GM13977 (cell line): ENCODE measurements at regions of chr2 and their contacts with region 1.

Region 1: DNA sequence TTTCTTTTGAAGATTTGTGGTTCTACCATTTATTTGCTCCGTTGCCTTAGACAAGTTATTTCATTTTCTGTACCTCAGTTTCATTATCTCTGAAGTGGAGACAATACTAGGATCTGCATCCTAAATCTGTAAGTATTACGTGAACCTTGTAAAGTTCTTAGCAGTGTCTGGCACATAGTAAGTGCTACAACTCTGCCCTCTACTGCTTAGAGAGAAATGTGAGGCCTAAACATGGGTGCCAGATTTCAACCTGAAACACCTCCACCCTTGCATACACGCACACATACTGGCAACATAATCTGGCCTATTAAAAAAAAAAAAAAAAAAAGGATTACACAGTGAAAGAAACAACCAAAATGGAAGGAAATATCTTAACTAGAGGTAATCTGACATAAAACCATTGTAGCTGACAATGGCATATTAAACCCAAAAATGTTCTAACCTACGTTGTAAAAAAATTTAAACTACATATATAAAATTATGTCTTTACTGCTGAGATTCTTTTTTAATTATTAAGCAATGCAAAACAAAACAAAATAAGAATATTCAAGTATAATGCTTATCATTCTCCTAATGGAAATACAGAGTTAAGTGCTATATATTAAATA is 132.6 kb downstream of the MAP2 start:
- DNase-seq: peak; percentile 33
- CTCF ChIP-seq: peak; percentile 45

Region 2: DNA sequence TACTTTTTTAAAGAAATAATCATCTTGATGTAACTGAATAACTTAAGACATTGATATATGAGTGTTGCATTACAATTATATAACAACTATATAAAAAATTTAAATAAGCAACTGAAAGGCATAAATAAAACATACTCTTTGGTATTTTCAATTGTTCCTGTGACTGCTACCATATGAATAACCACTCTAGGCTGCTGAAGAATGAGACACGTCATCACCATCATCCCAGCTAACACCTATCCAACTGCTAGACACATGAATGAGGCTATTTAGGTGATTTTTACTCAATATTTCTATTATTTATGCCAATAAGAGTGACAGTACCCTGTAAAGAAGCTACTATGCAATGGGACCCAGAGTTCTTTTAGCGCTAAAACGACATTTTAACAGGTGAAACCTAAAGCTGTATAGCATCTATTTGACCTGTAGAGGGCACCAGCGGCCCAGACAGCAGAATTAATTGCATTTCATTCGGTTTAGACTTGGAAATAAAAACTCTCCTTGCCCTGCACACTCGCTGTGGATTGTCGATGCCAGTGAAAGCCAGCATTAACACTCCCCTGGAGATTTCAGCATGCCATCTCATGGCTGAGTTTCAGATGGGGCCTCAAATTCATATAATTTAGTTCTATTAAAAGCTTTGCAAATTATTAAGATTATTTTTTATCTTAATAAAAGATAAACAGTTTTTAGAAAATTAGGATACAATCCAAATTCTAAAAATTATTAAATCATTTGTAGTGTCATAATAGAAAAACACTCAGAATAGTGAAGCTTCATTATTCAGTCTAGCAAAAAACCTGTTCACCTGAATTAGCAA is 222.1 kb before region 1 on chr2:
- in situ Hi-C with region 1: loop called (anchors 25 kb)
- DNase-seq: peak; percentile 34
- CTCF ChIP-seq: peak; percentile 78